ENCODE measurements at regions of chr13 and their contacts with region 1.

Region 1: DNA sequence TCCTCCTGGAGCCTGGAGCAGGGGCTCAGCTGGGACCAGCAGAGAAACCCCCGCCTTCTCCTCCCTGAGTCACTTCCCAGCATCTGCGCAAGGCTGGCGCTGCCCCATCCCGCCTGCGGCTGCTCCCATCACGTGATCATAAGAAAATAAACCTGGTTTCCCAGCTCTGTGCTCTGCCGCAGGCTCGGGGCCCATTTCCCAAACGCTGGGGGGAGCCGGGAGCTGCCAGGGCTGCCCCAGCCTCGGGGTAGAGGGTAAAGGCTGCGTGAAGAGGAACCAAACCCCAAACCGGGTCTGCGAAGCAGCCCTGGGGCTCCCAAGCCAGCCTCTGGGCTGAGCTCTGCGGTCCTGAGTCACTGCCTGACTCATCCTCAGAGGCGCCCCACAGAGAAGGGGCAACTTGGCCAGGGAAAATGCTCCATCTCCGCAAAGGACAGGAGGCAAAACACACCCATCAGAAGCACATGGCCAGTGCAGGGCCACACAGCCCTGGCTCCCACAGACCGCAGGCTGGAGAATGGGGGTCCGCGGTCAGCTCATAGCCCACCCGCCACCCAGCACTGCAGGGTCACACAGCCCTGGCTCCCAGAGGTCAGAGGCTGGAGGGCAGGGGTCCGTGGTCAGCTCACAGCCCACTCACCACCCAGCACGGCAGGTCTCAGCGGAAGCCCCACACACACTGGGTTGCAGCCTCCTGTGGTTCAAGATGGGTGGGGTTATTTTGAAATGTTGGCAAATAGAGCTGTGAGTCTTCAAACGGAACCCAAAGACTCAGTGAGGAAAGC is 67.1 kb downstream of the RASA3 start:
- DNase-seq: peak; percentile 72 to 86 (median 76)
- ATAC-seq: peak; percentile 83
- H3K4me3 ChIP-seq: no peak overlapping the region
- H3K4me1 ChIP-seq: peaks cover 31% of the 10 kb centered on the region
- CTCF ChIP-seq: no peak

Region 2: GRCh38 chr13:114132419-114133121 is 67.2 kb after region 1 on chr13 and contains the start of gene RASA3:
- intact Hi-C with region 1: loop called in 1 of 2 experiments (anchors 5 kb)
- DNase-seq: peak; percentile 80 to 88 (median 86)
- ATAC-seq: peak; percentile 86
- H3K4me3 ChIP-seq: peak within 1 kb of the TSS; percentile 51
- H3K4me1 ChIP-seq: peaks cover 22% of the 10 kb centered on the region
- CTCF ChIP-seq: no peak
- total RNA-seq, gene RASA3: 7.9 to 19.0 (median 8.4) TPM